ENCODE measurements at regions of chr22 and their contacts with region 1.

Region 1: GRCh38 chr22:40594924-40595323 is 41.6 kb downstream of the MRTFA start:
- DNase-seq: no peak
- H3K4me3 ChIP-seq: no peak overlapping the region
- H3K27me3 ChIP-seq: no peaks in the 10 kb centered on the region
- CTCF ChIP-seq: no peak

Region 2: GRCh38 chr22:40552070-40552469 is 42.9 kb before region 1 on chr22:
- CTCF ChIA-PET with region 1: no interaction called
- POLR2A ChIA-PET with region 1: no interaction called
- DNase-seq: no peak
- H3K4me3 ChIP-seq: no peak overlapping the region
- H3K27me3 ChIP-seq: no peaks in the 10 kb centered on the region
- CTCF ChIP-seq: no peak

Region 3: DNA sequence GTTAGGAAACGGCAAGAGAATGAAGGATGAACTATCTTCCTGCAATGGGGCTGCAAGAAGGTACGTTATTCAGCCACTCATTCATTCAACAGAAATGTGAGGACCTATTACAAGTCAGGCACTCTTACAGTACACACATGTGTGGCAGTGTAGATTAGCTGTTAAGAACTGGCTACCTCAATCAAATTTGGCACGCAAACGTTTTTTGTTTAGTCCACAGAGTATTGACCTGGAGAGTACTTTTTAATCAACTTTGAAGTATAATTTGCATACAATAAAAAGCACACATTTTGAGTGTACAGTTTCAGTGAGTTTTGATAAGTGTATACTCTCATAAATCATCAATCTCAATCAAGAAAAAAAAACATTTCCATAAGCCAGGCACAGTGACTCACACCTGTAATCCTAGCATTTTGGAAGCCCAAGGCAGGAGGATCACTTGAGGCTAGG is 17.4 kb after region 1 on chr22:
- CTCF ChIA-PET with region 1: no interaction called
- POLR2A ChIA-PET with region 1: no interaction called
- DNase-seq: no peak
- H3K4me3 ChIP-seq: no peak overlapping the region
- H3K27me3 ChIP-seq: no peaks in the 10 kb centered on the region
- CTCF ChIP-seq: no peak

Region 4: GRCh38 chr22:40624770-40625169 is 29.8 kb after region 1 on chr22:
- CTCF ChIA-PET with region 1: interaction called, 3 read pairs
- POLR2A ChIA-PET with region 1: interaction called, 12 read pairs
- DNase-seq: no peak
- H3K4me3 ChIP-seq: no peak overlapping the region
- H3K27me3 ChIP-seq: no peaks in the 10 kb centered on the region
- CTCF ChIP-seq: no peak

Measured in BJ (cell line).